GM10248 (cell line): ENCODE measurements at regions of chr6 and their contacts with region 1.

Region 1: GRCh38 chr6:83859410-83860358 is at the start of gene CYB5R4:
- DNase-seq: peak; percentile 96
- CTCF ChIP-seq: no peak

Region 2: GRCh38 chr6:83873869-83874268 is 14.2 kb after region 1 on chr6:
- CTCF ChIA-PET with region 1: interaction called, 15 read pairs
- POLR2A ChIA-PET with region 1: interaction called, 12 read pairs
- DNase-seq: no peak
- CTCF ChIP-seq: no peak